Mammary epithelial cell (primary cell): ENCODE measurements at regions of chr15 and their contacts with region 1.

Region 1: DNA sequence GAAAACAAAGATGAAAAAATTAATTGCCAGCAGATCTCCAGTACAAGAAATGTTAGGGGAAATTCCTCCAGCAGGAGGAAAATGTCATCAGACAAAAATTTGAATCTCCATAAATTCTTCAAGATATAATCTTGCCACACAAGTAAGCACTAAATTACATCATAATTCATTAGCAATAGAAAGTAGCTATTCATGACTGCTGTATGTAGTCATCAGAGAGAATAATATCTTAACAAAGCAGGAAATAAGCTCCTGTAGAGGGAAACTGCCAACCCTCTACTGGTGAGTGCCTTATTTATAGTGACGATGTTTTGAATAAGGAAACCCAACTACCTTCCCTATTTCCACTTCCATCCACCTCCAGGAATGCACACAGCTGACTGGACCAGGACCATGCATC is 15.8 kb upstream of the SLC27A2 start:
- DNase-seq: peak; percentile 83
- H3K4me3 ChIP-seq: no peak overlapping the region
- H3K27ac ChIP-seq: peak overlapping the region; percentile 53
- H3K4me1 ChIP-seq: peaks cover 29% of the 10 kb centered on the region
- H3K27me3 ChIP-seq: no peaks in the 10 kb centered on the region
- CTCF ChIP-seq: peak in 1 of 2 donors; percentile 11

Region 2: GRCh38 chr15:50083424-50084025 is 82.7 kb before region 1 on chr15:
- CTCF ChIA-PET with region 1: no interaction called
- dilution Hi-C with region 1: no loop called
- in situ Hi-C with region 1: no loop called
- intact Hi-C with region 1: no loop called
- DNase-seq: no peak
- H3K4me3 ChIP-seq: no peak overlapping the region
- H3K27ac ChIP-seq: no peak overlapping the region
- H3K4me1 ChIP-seq: no peaks in the 10 kb centered on the region
- H3K27me3 ChIP-seq: no peaks in the 10 kb centered on the region
- CTCF ChIP-seq: no peak

Region 3: GRCh38 chr15:50890771-50891558 is 724.7 kb after region 1 on chr15:
- CTCF ChIA-PET with region 1: no interaction called
- dilution Hi-C with region 1: no loop called
- in situ Hi-C with region 1: no loop called
- intact Hi-C with region 1: loop called (anchors 5 kb)
- DNase-seq: no peak
- H3K4me3 ChIP-seq: no peak overlapping the region
- H3K27ac ChIP-seq: no peak overlapping the region
- H3K4me1 ChIP-seq: no peaks in the 10 kb centered on the region
- H3K27me3 ChIP-seq: no peaks in the 10 kb centered on the region
- CTCF ChIP-seq: no peak